Activated CD8-positive, alpha-beta T cell treated with anti-CD3 and anti-CD28 coated beads for 36 hours (primary cell): ENCODE measurements at regions of chr18 and their contacts with region 1.

Region 1: DNA sequence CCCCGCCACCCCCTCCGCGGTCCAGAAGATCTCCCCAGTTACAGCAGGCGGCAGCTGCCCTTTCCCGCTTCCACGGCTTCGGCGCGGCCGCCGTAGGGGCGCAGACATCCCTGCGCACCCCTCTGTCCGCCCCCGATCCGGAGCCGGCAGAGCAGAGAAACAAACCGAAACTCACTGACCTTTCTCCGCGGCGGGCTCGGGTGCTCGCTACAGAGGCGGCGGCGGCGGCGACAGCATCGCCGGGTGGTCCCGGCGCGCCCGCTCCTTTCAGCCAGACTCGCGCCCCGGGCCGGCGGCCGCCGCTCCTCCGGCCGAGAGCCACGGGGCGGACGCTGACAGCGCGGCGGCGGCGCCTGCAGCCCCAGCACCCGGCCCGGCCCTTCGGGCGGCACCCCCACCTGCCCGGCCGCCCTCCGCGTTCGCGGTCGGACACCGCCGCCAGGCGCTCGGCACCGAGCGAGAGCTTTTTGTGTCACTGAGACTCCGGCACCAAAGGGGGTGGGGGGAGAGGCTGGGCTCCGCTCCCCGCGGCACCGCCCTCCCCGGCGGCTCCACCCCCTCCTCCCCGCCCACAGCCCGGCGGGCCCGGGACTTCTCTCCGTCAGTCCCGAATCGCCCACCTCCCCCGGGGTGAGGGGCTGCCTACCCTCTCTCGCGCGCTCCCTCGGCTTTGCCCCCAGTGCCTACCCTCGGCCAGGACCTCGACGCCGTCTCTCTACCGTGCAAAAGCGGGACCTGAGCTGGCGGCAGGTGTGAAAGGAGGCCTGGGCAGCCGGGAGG is 1.4 kb upstream of the RNF152 start:
- DNase-seq: peak; percentile 70
- ATAC-seq: peak; percentile 84
- H3K4me3 Mint-ChIP-seq: peak overlapping the region; percentile 76
- H3K27ac Mint-ChIP-seq: no peak overlapping the region
- H3K4me1 Mint-ChIP-seq: peaks cover 14% of the 10 kb centered on the region
- H3K27me3 Mint-ChIP-seq: peaks cover 44% of the 10 kb centered on the region
- CTCF ChIP-seq: no peak

Region 2: GRCh38 chr18:60684843-60685513 is 1209.2 kb before region 1 on chr18:
- CTCF ChIA-PET with region 1: no interaction called
- POLR2A ChIA-PET with region 1: no interaction called
- intact Hi-C with region 1: no loop called
- DNase-seq: no peak
- ATAC-seq: no peak
- H3K4me3 Mint-ChIP-seq: no peak overlapping the region
- H3K27ac Mint-ChIP-seq: no peak overlapping the region
- H3K4me1 Mint-ChIP-seq: no peaks in the 10 kb centered on the region
- H3K27me3 Mint-ChIP-seq: no peaks in the 10 kb centered on the region
- CTCF ChIP-seq: peak; percentile 37

Region 3: GRCh38 chr18:61635901-61636528 is 258.1 kb before region 1 on chr18:
- CTCF ChIA-PET with region 1: no interaction called
- POLR2A ChIA-PET with region 1: no interaction called
- intact Hi-C with region 1: loop called (anchors 10 kb)
- DNase-seq: peak; percentile 58
- ATAC-seq: peak; percentile 70
- H3K4me3 Mint-ChIP-seq: no peak overlapping the region
- H3K27ac Mint-ChIP-seq: no peak overlapping the region
- H3K4me1 Mint-ChIP-seq: no peaks in the 10 kb centered on the region
- H3K27me3 Mint-ChIP-seq: peaks cover 25% of the 10 kb centered on the region
- CTCF ChIP-seq: peak; percentile 80

Region 4: GRCh38 chr18:61765097-61765496 is 129.1 kb before region 1 on chr18:
- CTCF ChIA-PET with region 1: no interaction called
- POLR2A ChIA-PET with region 1: no interaction called
- intact Hi-C with region 1: loop called (anchors 10 kb)
- DNase-seq: no peak
- ATAC-seq: peak; percentile 51
- H3K4me3 Mint-ChIP-seq: no peak overlapping the region
- H3K27ac Mint-ChIP-seq: no peak overlapping the region
- H3K4me1 Mint-ChIP-seq: peaks cover 15% of the 10 kb centered on the region
- H3K27me3 Mint-ChIP-seq: peaks cover 27% of the 10 kb centered on the region
- CTCF ChIP-seq: no peak